ENCODE measurements at regions of chr9 and their contacts with region 1.

Region 1: DNA sequence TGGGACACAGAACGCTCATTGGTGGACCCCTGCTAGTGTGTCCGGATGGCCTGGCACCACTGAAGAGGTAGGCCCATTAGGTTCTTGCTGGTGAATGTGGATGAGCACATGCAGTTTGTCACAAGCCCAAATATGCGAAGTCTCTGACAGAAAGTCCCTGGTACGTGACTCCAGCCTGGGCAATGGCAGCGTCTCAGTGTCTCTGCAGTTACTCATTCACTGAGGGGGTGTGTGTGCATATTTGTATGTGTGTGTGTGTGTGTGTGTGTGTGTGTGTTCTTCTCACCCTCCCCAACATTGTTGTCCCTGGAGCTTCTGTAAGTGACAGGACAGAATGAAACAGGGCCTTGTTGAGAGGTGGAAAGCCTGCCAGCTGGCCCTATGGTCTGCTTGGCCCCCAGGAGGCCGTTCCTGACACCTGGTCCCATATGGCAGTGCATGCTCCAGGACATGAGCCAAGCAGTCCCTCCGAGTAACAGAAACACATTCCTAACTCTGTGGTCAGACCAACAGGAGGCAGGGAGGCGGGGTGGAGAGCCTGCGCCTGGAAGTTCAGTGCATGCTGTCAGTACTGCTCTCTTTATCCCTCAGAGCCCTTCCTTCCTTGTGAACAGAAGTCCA is 169.9 kb downstream of the SLC28A3 start:
- DNase-seq: peak; percentile 30 to 37
- ATAC-seq: peak; percentile 58 to 73
- H3K4me3 ChIP-seq: no peak overlapping the region
- H3K27ac ChIP-seq: no peak overlapping the region
- H3K4me1 ChIP-seq: no peaks in the 10 kb centered on the region
- CTCF ChIP-seq: no peak
- EP300 ChIP-seq: no peak
- POLR2A ChIP-seq: no peak
- RAD21 ChIP-seq: no peak

Region 2: DNA sequence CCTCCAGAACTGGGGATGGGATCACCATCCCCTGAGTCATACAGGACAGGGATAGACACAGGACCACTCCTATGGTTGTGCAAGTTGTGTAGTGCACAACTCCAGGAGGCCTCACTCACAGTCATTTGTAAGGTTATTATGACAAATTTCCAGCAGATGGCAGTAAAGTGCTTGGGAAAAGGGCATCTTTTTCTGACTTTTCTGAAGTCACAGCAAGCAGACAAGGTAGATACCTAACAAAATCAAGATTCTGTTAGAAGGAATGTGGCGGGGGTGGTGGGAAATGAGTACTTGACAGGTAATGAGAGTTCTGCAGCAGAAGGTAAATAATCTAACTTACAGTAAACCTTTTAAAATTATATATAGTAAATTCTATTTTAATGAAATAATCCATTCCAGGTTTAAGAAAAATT is 232.7 kb before region 1 on chr9:
- CTCF ChIA-PET with region 1: interaction called, 18 read pairs
- POLR2A ChIA-PET with region 1: no interaction called
- DNase-seq: peak; percentile 56 to 70
- ATAC-seq: peak; percentile 84 to 86
- H3K4me3 ChIP-seq: no peak overlapping the region
- H3K27ac ChIP-seq: no peak overlapping the region
- H3K4me1 ChIP-seq: peaks cover 23% of the 10 kb centered on the region; the same call in 2 of the 3 replicates
- CTCF ChIP-seq: peak; percentile 84
- EP300 ChIP-seq: no peak
- POLR2A ChIP-seq: no peak
- RAD21 ChIP-seq: peak; percentile 85 to 88

Region 3: DNA sequence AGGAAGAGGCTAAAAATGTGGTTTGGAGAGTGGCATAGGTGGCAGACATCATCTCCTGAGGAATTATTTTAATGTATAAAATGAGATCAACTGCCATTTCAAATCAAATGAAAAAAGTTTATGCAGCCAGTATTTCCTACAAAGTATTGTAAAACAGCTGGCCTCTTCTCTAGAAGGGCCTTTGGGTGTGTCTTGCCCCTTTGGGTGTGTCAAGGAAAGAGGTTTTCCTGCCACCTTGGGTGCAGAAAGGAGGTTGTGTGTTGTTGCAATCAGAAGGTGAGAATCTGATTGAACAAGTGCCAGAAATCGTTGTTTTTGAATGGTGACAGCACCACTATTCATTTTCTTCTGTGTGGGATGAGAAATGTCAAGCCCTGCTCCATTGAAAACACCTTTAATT is 62.6 kb before region 1 on chr9:
- CTCF ChIA-PET with region 1: no interaction called
- POLR2A ChIA-PET with region 1: no interaction called
- DNase-seq: no peak
- ATAC-seq: no peak
- H3K4me3 ChIP-seq: no peak overlapping the region
- H3K27ac ChIP-seq: no peak overlapping the region
- H3K4me1 ChIP-seq: no peaks in the 10 kb centered on the region
- CTCF ChIP-seq: no peak
- EP300 ChIP-seq: no peak
- POLR2A ChIP-seq: no peak
- RAD21 ChIP-seq: no peak

Region 4: DNA sequence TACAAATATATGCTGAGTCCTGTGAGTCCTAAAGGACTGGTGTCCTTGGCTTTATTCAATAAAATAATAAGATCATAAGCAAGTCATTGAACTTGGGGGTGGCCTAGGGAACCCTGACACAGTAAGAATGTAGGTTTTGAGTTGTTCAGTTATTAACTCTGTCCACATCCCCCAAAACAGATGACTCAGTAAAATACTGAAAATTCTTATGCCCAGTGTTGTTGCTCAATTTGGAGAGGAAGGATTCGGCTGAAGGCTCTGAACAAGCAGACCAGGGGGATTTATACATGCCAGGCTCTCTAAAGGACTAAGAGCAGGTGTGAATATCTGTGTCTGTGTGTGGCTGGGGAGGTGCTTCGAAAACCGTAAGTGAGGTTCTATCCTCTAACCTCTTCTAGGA is 16.3 kb before region 1 on chr9:
- CTCF ChIA-PET with region 1: interaction called, 49 read pairs
- POLR2A ChIA-PET with region 1: no interaction called
- DNase-seq: no peak
- ATAC-seq: 0 out of 6 replicates have a peak, but pooled peaks of 1 of the 2 experiments have one; percentile 34
- H3K4me3 ChIP-seq: no peak overlapping the region
- H3K27ac ChIP-seq: no peak overlapping the region
- H3K4me1 ChIP-seq: no peaks in the 10 kb centered on the region
- CTCF ChIP-seq: no peak
- EP300 ChIP-seq: no peak
- POLR2A ChIP-seq: no peak
- RAD21 ChIP-seq: no peak

Region 5: GRCh38 chr9:84187090-84187489 is 16.5 kb after region 1 on chr9:
- CTCF ChIA-PET with region 1: interaction called, 23 read pairs
- POLR2A ChIA-PET with region 1: no interaction called
- DNase-seq: no peak
- ATAC-seq: no peak
- H3K4me3 ChIP-seq: no peak overlapping the region
- H3K27ac ChIP-seq: no peak overlapping the region
- H3K4me1 ChIP-seq: no peaks in the 10 kb centered on the region
- CTCF ChIP-seq: no peak
- EP300 ChIP-seq: no peak
- POLR2A ChIP-seq: no peak
- RAD21 ChIP-seq: no peak

Region 6: GRCh38 chr9:84271531-84271900 is 100.9 kb after region 1 on chr9:
- CTCF ChIA-PET with region 1: no interaction called
- POLR2A ChIA-PET with region 1: no interaction called
- DNase-seq: no peak
- ATAC-seq: no peak
- H3K4me3 ChIP-seq: no peak overlapping the region
- H3K27ac ChIP-seq: no peak overlapping the region
- H3K4me1 ChIP-seq: no peaks in the 10 kb centered on the region
- CTCF ChIP-seq: no peak
- EP300 ChIP-seq: no peak
- POLR2A ChIP-seq: no peak
- RAD21 ChIP-seq: no peak